Cardiac septum (tissue), 1 donor: ENCODE measurements at regions of chr3 and their contacts with region 1.

Region 1: DNA sequence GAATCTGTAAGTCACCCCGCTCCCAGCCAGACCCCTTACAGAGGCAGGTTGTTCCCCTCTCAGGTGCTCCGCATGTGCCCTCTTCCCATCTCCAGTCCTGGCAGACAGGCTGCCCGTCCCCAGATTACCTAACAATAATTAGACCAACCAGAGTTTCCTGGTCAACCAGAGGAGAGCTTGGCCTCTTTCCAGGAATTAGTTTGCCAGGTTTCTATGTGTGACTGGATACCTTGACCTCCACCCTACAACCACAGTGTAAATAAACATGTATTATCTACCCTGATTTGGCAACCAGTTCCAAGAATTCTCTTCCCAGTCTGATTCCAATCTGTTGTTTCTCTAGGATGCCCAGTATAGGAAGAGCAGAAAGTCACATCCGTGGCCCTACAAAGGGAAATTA is 178.0 kb upstream of the UMPS start:
- DNase-seq: no peak

Region 2: GRCh38 chr3:124351430-124352148 is 200.7 kb before region 1 on chr3:
- intact Hi-C with region 1: loop called (anchors 5 kb)
- DNase-seq: no peak

Region 3: DNA sequence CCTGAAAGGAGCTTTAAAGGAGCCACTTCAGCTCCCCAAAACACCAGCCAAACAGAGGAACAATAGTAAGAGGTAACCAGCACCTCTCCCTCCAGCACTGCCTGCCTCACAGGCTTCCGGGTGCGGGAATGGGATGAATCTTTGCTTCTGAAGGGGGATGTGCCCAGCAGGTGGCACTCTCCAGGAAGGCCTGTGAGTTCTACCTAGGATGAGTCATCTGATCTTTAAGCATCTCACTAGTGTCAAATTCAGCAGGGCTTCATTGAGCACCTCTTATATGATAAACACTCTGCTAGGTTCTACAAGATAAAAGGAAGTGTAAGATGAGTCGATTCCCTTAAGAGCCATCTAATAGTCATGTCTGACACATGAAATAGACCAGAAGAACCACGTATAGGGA is 59.4 kb before region 1 on chr3:
- intact Hi-C with region 1: loop called (anchors 5 kb)
- DNase-seq: no peak

Region 4: DNA sequence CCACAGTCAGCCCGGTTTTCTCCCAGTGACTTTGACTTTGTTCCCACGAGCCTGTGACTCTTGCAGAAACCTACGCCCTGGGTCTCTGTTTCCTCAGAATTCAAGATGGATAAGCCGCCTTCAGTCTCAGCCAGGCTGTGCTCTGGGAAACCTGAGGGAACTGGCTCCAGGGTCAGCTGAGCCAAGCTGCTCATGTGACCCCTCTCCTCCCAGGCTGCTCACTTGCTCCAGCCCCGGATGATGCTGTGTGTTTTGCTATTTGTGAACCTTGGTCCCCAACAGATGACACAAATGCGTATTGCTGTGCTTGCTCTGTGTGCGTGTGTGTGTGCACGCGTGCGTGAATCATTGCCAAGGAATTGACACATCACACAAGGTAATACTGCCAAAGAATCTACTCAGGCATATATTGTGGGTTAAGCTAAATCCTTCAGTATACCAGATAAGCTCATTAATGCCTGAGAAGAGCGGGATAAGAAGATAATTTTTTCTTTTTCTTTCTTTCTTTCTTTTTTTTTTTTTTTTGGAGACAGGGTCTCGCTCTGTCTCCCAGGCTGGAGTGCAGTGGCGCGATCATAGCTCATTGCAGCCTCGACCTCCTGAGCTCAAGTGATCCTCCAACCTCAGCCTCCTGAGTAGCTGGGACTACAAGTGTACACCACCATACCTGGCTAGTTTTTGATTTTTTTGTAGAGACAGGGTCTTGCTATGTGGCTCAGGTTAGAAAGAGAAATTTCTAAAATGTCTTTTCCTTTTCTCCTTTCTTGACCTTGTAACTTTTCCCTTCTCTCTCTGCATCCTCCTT is 148.8 kb after region 1 on chr3:
- intact Hi-C with region 1: no loop called
- DNase-seq: no peak